Panc1 (cell line): ENCODE measurements at regions of chr12 and their contacts with region 1.

Region 1: DNA sequence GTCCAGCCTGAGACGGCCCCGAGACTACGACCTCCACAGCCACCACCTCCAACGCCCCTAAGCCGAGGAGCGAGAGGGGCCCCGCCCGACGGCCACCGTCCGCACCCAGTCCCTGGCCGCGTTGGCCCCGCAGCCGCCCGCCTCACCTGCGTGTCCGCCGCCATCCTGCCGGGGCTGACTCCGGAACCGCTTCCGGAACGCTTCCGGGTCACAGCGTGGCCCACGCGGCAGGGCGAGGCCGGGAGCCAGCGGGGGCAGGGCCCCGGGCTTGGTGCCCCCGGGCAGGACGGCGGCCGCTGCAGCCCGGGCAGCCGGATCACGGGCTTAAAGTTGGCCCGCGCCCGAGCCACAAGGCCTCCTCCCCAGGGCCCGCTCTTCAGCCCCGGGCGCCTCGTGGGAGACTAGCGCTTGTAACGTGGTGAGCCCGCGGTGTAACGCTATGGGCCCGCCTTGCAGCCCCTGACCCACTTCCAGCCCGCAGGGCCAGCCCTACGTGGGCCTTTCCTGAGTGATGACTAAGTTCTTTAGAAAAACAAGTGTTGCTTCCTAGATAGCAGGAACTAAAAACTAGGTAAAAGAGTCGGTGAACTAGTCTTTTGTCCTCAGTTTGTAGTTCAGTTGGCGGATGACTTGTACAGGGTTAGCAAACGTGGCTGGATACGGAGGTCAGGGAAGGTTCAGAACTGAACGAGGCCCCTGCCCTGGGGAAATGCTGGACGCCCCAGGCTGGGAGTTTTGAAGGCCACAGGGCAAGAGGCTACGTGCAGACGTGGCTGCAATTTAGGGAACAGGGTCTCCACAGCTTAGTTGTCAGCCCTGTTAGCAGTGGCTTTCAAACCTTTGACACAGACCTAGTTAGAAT is at the start of gene GCN1:
- DNase-seq: peak; percentile 62
- ATAC-seq: peak; percentile 85
- H3K4me3 ChIP-seq: peak within 1 kb of the TSS; percentile 88 to 95
- H3K27ac ChIP-seq: peak within 1 kb of the TSS; percentile 98
- H3K4me1 ChIP-seq: peaks cover 31% of the 10 kb centered on the region
- H3K27me3 ChIP-seq: no peaks in the 10 kb centered on the region
- CTCF ChIP-seq: no peak
- total RNA-seq, gene GCN1: 175 TPM

Region 2: DNA sequence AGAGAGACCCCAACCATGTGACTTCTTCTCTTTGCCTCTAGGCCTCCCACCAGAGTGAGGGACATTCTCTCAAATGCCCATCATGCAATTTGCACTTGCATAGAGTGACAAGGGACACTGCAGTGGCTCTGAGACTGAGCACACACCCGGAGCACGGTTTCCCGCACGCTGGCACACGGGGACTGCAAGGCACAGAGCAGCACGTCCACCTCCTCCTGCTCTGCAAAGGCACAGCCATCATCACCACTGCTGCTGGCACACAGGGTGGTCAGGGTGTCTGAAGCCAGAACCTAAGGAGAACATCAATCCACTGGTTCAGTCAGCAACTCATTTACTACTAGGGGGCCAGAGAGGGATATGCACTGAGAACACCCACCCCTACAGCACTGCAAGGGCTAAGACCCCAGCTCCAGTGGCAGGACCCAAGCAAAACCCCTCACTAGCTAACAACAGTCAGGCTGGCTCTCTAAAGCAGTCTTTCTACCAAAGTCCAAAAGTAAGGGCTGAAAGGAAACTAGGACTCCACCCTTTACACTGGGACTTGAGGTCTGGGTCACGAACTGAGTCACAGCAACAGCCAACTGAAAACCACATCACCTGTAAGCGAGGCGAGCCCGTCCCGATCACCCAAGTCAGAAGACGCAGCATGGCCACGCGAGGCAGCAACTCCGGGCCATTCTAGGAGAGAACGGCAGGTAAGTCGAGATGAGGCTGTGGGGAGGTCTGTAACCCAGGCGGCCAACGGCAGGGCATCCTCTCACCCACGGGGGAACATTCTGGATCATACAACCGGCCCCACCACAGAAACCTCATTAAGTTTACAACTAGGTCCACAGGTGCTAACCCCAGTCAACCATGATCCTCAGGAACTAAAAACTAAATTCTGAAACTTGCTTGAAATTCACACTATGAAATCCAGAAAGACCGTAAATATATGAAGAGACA is 38.2 kb before region 1 on chr12:
- CTCF ChIA-PET with region 1: no interaction called
- POLR2A ChIA-PET with region 1: no interaction called
- in situ Hi-C with region 1: no loop called
- intact Hi-C with region 1: no loop called
- DNase-seq: no peak
- ATAC-seq: no peak
- H3K4me3 ChIP-seq: no peak overlapping the region
- H3K27ac ChIP-seq: no peak overlapping the region
- H3K4me1 ChIP-seq: no peaks in the 10 kb centered on the region
- H3K27me3 ChIP-seq: no peaks in the 10 kb centered on the region
- CTCF ChIP-seq: no peak

Region 3: DNA sequence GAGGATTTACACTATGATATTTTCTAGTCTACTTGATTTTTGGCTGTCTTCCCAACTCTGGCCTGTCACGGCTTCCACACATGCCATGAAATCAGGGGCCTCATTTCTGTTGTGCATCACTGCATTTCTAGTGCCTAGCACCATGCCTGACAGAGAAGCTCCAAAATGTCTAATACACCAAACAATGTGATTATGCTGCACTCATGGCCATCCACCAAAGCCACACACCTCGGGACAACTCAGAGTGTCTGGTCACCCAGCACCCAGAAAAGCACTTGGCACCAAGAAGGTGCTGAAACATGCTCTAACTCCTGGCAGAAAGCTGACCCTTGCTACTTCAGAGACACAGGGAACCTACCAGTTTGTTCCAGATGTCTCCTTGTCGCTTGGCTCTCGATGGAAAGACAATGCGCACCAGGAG is 11.5 kb before region 1 on chr12:
- CTCF ChIA-PET with region 1: no interaction called
- POLR2A ChIA-PET with region 1: no interaction called
- in situ Hi-C with region 1: no loop called
- intact Hi-C with region 1: no loop called
- DNase-seq: no peak
- ATAC-seq: no peak
- H3K4me3 ChIP-seq: no peak overlapping the region
- H3K27ac ChIP-seq: no peak overlapping the region
- H3K4me1 ChIP-seq: no peaks in the 10 kb centered on the region
- H3K27me3 ChIP-seq: no peaks in the 10 kb centered on the region
- CTCF ChIP-seq: no peak

Region 4: DNA sequence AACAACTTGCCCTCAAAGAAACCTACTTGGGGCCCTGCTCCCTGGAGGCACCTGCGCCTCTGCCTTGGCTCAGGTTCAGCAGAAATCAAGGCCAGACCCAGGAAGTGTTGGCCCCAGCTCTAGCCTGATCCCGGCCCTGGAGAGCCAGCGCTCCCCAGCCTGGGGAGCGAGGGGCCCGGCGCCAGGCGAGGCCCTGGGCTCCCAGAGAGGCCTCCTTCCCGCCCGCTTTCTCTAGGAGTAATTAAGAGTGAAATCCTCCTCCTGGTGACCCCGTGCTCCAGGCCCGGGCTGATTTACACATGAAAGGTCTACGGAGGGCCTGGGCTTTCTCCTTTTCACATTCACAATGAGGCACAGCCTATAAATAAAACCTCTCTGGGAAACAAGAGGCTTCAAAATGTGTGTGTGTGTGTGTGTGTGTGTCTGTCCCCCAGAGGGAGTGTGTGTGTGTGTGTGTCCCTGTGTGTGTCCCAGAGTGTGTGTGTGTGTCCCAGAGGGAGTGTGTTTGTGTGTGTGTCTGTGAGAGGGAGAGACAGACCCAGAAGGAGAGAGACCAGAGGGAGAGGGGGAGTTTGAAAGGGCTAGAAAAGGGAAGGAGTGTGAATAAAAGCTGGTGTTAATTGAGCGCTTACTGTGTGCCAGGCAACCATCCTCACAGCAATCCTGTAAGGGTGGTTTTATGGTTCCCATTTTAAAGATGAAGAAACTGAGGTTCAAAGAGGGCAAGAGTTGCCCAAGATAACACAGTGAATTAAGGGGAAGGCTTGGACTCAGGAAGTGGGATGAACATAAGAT is 219.3 kb after region 1 on chr12:
- CTCF ChIA-PET with region 1: no interaction called
- POLR2A ChIA-PET with region 1: no interaction called
- in situ Hi-C with region 1: no loop called
- intact Hi-C with region 1: no loop called
- DNase-seq: no peak
- ATAC-seq: peak; percentile 74
- H3K4me3 ChIP-seq: no peak overlapping the region
- H3K27ac ChIP-seq: no peak overlapping the region
- H3K4me1 ChIP-seq: no peaks in the 10 kb centered on the region
- H3K27me3 ChIP-seq: no peaks in the 10 kb centered on the region
- CTCF ChIP-seq: no peak

Region 5: GRCh38 chr12:120669055-120669840 is 474.5 kb after region 1 on chr12:
- CTCF ChIA-PET with region 1: no interaction called
- POLR2A ChIA-PET with region 1: interaction called, 10 read pairs
- in situ Hi-C with region 1: no loop called
- intact Hi-C with region 1: no loop called
- DNase-seq: no peak
- ATAC-seq: peak; percentile 37; the same call in 1 of the 2 replicates
- H3K4me3 ChIP-seq: no peak overlapping the region
- H3K27ac ChIP-seq: no peak overlapping the region
- H3K4me1 ChIP-seq: no peaks in the 10 kb centered on the region
- H3K27me3 ChIP-seq: no peaks in the 10 kb centered on the region
- CTCF ChIP-seq: no peak